Spleen (tissue), 13 donors: ENCODE measurements at regions of chr9 and their contacts with region 1.

Region 1: DNA sequence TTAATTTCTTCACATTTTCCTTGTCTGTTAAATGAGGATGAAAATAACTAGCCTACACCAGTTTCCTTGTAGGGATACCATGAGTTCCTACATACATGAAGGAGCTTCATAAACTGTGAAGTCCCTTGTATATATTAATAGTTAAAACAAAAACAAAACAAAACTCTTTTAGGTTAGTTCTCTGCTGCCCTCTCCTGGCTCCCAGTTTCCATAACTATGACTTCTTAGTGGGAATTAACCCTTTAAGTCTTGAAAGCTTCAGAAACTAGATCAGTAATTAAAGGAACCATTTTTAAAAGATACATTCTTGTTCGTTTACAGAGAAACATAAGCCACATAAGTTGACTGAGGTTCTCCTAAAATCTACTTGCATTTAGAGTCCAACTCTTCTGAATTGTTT is 500.0 kb upstream of the C9orf72 start:
- DNase-seq: no peak
- H3K4me3 ChIP-seq: no peak overlapping the region
- H3K27ac ChIP-seq: no peak overlapping the region
- H3K4me1 ChIP-seq: no peaks in the 10 kb centered on the region
- H3K27me3 ChIP-seq: no peaks in the 10 kb centered on the region
- CTCF ChIP-seq: peak in 6 of 11 experiments; percentile 15 to 49 (median 42)
- POLR2A ChIP-seq: no peak

Region 2: GRCh38 chr9:27473111-27473529 is 600.1 kb before region 1 on chr9:
- intact Hi-C with region 1: no loop called
- DNase-seq: peak; percentile 58
- H3K4me3 ChIP-seq: no peak overlapping the region
- H3K27ac ChIP-seq: no peak overlapping the region
- H3K4me1 ChIP-seq: peaks cover 4 to 75% (median 18%) of the 10 kb centered on the region in 6 donors
- H3K27me3 ChIP-seq: no peaks in the 10 kb centered on the region
- CTCF ChIP-seq: no peak
- POLR2A ChIP-seq: no peak

Region 3: GRCh38 chr9:27726244-27727081 is 346.8 kb before region 1 on chr9:
- intact Hi-C with region 1: loop called (anchors 2 kb)
- DNase-seq: no peak
- H3K4me3 ChIP-seq: no peak overlapping the region
- H3K27ac ChIP-seq: no peak overlapping the region
- H3K4me1 ChIP-seq: peaks cover 0 to 15% (median 6%) of the 10 kb centered on the region in 6 donors
- H3K27me3 ChIP-seq: peaks cover 0 to 16% (median 0%) of the 10 kb centered on the region in 7 donors
- CTCF ChIP-seq: peak; percentile 26 to 73 (median 65)
- POLR2A ChIP-seq: no peak

Region 4: GRCh38 chr9:28014212-28014611 is 59.1 kb before region 1 on chr9:
- intact Hi-C with region 1: loop called (anchors 10 kb)
- DNase-seq: no peak
- H3K4me3 ChIP-seq: no peak overlapping the region
- H3K27ac ChIP-seq: no peak overlapping the region
- H3K4me1 ChIP-seq: no peaks in the 10 kb centered on the region
- H3K27me3 ChIP-seq: no peaks in the 10 kb centered on the region
- CTCF ChIP-seq: no peak
- POLR2A ChIP-seq: no peak